ENCODE measurements at regions of chr5 and their contacts with region 1.

Region 1: GRCh38 chr5:91383027-91383955 is at the start of gene ARRDC3:
- DNase-seq: peak; percentile 95 to 97
- ATAC-seq: peak; percentile 68 to 91 (median 76)
- H3K4me3 ChIP-seq: peak within 1 kb of the TSS; percentile 67 to 84 (median 78)
- H3K27ac ChIP-seq: peak within 1 kb of the TSS; percentile 92 to 99 (median 98)
- H3K4me1 ChIP-seq: peaks cover 0 to 30% (median 21%) of the 10 kb centered on the region in 9 donors
- H3K27me3 ChIP-seq: no peaks in the 10 kb centered on the region
- CTCF ChIP-seq: peak in 2 of 9 donors; percentile 4 to 12
- total RNA-seq, gene ARRDC3: 9.4 to 61.5 (median 21.0) TPM

Region 2: DNA sequence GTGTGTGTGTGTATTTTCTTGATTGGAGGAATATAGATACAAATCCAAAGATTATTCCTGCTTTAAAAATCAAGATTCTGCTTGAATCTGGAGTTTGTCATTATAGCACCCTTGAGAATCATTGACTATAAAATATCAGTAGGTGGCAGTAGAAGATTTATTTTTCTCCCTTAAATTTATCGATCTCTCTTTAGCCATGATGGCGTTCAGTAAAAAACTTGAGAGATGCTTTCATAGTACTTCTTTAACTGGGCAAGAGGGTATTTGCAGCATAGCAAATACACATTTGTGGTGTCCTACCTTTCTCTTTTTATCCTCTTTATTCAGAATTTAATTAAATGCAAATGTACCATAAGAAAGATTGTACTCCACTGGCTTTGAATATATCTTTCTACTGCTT is 517.0 kb before region 1 on chr5:
- intact Hi-C with region 1: loop called in 6 of 10 experiments (anchors 2 to 10 kb)
- DNase-seq: no peak
- ATAC-seq: peak in 4 of 8 donors; percentile 46 to 63 (median 61)
- H3K4me3 ChIP-seq: no peak overlapping the region
- H3K27ac ChIP-seq: no peak overlapping the region
- H3K4me1 ChIP-seq: peaks cover 0 to 20% (median 11%) of the 10 kb centered on the region in 9 donors
- H3K27me3 ChIP-seq: no peaks in the 10 kb centered on the region
- CTCF ChIP-seq: peak; percentile 28 to 70 (median 59)

Region 3: DNA sequence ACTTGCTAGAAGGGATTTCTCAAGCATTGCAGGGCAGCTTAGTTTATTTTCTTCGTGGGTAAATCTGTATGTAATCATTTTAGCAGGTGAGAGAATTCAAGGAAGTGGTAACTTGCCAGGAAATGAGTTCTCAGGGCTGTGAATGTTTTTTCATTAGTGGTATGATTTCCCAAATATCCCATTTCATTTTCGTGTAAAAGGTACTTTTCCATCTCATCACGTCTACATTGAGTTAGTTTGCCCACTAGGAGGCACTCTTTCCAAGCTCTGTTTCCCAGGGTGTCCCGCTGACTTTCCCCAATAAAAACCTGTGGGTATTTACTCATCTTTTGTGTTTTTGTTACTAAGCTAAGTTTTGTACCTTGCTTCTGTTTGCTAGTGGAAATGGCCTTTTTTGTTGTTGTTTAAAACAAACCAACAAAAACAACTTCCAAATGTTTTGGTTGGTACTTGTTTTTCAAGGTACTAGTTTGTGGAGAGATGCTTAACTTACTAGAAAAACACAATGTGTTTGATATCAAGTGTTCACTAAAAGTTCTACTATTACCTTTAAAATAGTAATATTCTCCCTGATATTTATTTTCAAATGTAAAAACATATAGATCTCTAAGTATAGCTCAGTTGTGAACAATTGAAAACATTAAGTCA is 451.1 kb before region 1 on chr5:
- intact Hi-C with region 1: loop called in 8 of 10 experiments (anchors 2 to 10 kb)
- DNase-seq: peak in 1 of 2 donors; percentile 63
- ATAC-seq: peak in 7 of 8 donors; percentile 51 to 84 (median 67)
- H3K4me3 ChIP-seq: no peak overlapping the region
- H3K27ac ChIP-seq: peak overlapping the region in 1 of 10 donors; percentile 25
- H3K4me1 ChIP-seq: peaks cover 0 to 15% (median 0%) of the 10 kb centered on the region in 9 donors
- H3K27me3 ChIP-seq: no peaks in the 10 kb centered on the region
- CTCF ChIP-seq: peak; percentile 54 to 87 (median 82)

Region 4: GRCh38 chr5:91219803-91220371 is 163.4 kb before region 1 on chr5:
- intact Hi-C with region 1: loop called in 6 of 10 experiments (anchors 5 to 10 kb)
- DNase-seq: no peak
- ATAC-seq: peak in 3 of 8 donors; percentile 35 to 68 (median 61)
- H3K4me3 ChIP-seq: no peak overlapping the region
- H3K27ac ChIP-seq: peak overlapping the region in 4 of 10 donors; percentile 25 to 86 (median 38)
- H3K4me1 ChIP-seq: peaks cover 0 to 21% (median 0%) of the 10 kb centered on the region in 9 donors
- H3K27me3 ChIP-seq: no peaks in the 10 kb centered on the region
- CTCF ChIP-seq: peak in 7 of 9 donors; percentile 33 to 58 (median 44)

Region 5: DNA sequence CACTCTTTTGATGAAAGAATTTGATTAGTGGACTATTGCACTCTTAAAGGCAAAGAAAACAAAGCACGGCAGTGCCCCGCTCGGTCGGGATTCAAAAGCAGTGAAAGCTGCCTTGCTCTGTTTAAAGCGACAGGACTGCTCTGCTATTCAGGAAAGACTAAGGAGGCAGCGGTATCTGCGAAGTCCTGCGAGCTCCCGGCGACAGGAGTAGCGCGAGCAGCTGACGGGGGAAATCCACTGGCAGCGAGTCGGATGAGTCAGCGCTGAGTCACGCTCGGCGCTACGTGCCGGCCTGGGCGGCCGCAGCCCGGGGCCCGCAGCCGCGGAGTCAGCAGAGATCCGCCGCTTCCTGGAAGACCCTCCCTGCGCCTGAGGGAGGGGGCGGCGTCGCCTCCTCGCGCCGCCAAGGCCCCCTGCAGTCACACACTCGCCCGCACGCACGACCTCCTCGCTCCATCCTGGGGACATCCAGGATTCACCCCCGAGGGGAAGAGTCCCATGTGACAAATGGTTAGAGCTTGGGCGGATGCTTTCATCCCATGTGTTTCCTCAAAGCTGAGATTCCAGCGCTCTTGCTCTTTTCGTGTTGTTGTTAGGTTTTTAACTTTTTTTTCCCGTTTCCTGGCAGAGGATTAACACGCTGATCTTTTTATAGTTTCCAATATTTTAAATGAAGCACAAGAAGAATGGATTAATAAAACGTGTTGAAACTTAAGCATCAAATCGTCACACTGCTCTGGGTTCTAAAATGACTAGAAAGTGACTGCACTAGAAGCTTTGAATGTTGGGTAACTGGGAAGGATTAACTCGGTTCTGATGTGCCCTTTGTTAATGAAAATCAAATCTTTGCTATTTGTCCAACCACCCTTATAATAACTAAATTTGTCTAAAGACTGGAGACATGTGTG is 102.7 kb before region 1 on chr5:
- intact Hi-C with region 1: loop called in 7 of 10 experiments (anchors 1 to 2 kb)
- DNase-seq: peak; percentile 94
- ATAC-seq: peak; percentile 97 to 99 (median 98)
- H3K4me3 ChIP-seq: peak overlapping the region; percentile 32 to 69 (median 56)
- H3K27ac ChIP-seq: peak overlapping the region; percentile 78 to 95 (median 93)
- H3K4me1 ChIP-seq: peaks cover 0 to 34% (median 8%) of the 10 kb centered on the region in 9 donors
- H3K27me3 ChIP-seq: no peaks in the 10 kb centered on the region
- CTCF ChIP-seq: peak in 2 of 9 donors; percentile 20 to 25